Dorsolateral prefrontal cortex (tissue), 120 donors: ENCODE measurements at regions of chr14 and their contacts with region 1.

Region 1: GRCh38 chr14:61025251-61026223 is 44.5 kb downstream of the SLC38A6 start:
- DNase-seq: peak in 9 of 10 donors; percentile 27 to 83 (median 52)
- H3K4me3 ChIP-seq: no peak overlapping the region
- H3K27ac ChIP-seq: peak overlapping the region in 1 of 59 donors; percentile 12
- H3K27me3 ChIP-seq: no peaks in the 10 kb centered on the region
- CTCF ChIP-seq: peak; percentile 80 to 97 (median 90)

Region 2: GRCh38 chr14:60622917-60623257 is 402.6 kb before region 1 on chr14:
- intact Hi-C with region 1: loop called (anchors 2 to 5 kb)
- DNase-seq: no peak
- H3K4me3 ChIP-seq: no peak overlapping the region
- H3K27ac ChIP-seq: no peak overlapping the region
- H3K27me3 ChIP-seq: peaks cover 0 to 9% (median 0%) of the 10 kb centered on the region in 45 donors
- CTCF ChIP-seq: no peak

Region 3: GRCh38 chr14:60632777-60633176 is 392.8 kb before region 1 on chr14:
- intact Hi-C with region 1: loop called in 1 of 2 experiments (anchors 5 kb)
- DNase-seq: no peak
- H3K4me3 ChIP-seq: no peak overlapping the region
- H3K27ac ChIP-seq: no peak overlapping the region
- H3K27me3 ChIP-seq: peaks cover 0 to 25% (median 16%) of the 10 kb centered on the region in 45 donors
- CTCF ChIP-seq: no peak

Region 4: GRCh38 chr14:61063461-61063860 is 37.9 kb after region 1 on chr14:
- intact Hi-C with region 1: no loop called
- DNase-seq: no peak
- H3K4me3 ChIP-seq: no peak overlapping the region
- H3K27ac ChIP-seq: no peak overlapping the region
- H3K27me3 ChIP-seq: no peaks in the 10 kb centered on the region
- CTCF ChIP-seq: no peak

Region 5: DNA sequence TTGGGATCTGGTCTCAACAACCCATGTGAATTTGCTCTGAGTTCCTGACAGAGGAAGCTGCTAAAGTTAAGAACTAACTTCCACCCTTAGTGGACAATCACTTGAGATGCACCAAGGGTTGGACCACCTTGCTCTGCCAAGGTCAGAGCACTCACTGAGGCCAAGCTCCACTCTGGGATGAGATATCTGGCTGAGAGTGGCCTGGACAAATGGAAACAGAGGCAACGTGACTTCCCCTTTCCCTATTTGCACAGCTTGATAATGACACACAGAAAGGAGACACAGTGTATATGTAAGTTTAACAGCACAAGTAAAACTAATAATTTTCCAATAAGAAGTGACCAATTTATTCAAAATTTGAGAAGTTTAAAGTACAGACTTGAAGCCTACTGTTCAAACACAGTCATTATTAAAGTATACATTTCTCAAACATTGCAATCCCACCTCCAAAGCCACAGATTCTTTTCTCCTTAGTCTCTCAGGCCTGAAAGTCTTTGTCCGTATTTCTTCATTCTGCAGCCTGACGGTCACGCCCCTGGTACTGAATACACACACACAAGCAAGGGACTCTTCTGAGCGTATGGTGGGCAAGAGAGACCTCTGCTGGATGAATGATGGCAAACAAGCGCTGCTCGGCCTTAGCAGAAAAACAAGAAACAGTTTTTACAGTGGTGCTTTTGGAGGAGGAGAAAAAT is 227.0 kb after region 1 on chr14:
- intact Hi-C with region 1: loop called (anchors 10 kb)
- DNase-seq: peak; percentile 30 to 84 (median 62)
- H3K4me3 ChIP-seq: no peak overlapping the region
- H3K27ac ChIP-seq: no peak overlapping the region
- H3K27me3 ChIP-seq: peaks cover 0 to 3% (median 0%) of the 10 kb centered on the region in 45 donors
- CTCF ChIP-seq: peak; percentile 30 to 98 (median 87)